ENCODE measurements at regions of chr5 and their contacts with region 1.

Region 1: DNA sequence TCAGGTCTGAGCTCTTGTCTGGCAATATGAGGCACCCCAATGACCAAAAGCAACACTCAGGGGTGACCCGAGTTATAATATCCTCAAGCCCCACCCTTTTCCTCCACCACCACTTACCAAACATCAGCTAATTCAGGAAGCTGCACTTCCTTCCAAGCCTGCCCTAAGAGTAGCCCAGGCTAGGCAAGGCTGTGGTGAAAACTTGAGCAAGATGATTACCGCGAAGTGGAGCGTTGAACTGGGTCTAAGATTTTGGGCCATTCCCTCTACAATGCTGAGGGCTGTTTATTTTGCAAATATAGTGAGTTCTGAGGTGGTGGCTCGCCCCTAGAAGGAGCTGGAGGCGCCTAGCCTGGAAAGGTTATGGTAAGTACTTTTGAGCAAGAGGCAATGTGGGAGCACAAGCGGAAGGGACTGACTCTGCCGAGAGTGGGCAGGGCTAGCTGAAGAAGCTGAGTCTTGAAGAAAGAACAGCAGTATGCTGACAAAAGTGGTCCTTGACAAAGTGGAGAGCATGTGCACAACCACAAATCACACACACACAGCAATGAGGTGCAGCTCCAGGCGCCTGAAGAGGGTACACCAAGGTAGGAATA is at the start of gene HK3:
- DNase-seq: peak; percentile 77 to 83 (median 82)
- H3K4me3 ChIP-seq: peak within 1 kb of the TSS; percentile 63 to 82 (median 70)
- H3K4me3 Mint-ChIP-seq: peak within 1 kb of the TSS; percentile 88 to 92
- H3K27ac ChIP-seq: peak within 1 kb of the TSS; percentile 84 to 88
- H3K27ac Mint-ChIP-seq: peak within 1 kb of the TSS; percentile 89 to 98 (median 97)
- H3K4me1 ChIP-seq: peaks cover 95 to 97% of the 10 kb centered on the region in 2 donors
- H3K4me1 Mint-ChIP-seq: peaks cover 97% of the 10 kb centered on the region
- H3K27me3 ChIP-seq: no peaks in the 10 kb centered on the region
- H3K27me3 Mint-ChIP-seq: peaks cover 0 to 2% (median 0%) of the 10 kb centered on the region in 3 donors
- CTCF ChIP-seq: no peak
- polyA plus RNA-seq, gene HK3: 174 to 988 (median 204) TPM

Region 2: DNA sequence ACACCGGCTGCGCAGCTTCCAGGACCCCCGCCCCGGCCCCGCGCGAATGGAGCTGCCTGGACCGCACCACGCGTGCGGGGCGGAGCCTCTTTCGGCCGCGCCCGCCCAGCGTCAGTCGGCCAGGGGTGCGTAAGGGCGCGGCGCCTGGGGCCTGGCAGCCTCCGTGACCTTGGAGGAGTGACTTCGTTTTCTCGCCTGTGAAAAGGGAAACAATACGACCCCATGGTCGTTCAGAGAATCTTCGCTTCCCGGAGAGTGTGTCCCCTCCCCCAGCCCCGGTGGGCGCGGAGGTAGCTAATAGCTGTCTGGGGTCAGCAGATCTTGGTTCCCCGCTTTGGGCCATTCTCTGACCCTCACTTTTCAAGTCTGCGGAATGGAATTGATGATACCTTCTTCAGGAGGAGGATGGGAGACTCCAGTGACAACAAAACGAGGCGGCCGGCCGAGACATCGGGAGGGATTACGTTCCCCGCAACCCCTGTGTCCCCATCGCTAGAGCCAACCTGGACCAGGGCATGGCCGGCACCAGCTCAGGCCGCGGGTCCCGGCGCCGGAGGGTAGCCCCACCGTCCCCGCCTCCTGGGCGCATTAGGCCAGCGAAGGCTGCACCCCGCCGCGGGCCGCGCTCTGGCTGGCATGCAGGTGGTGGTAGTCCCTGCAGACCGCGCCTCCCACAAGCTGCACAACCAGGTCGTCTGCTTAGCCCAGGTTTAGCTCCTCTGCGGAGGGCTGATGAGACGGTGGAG is 355.8 kb before region 1 on chr5:
- intact Hi-C with region 1: loop called in 1 of 2 experiments (anchors 10 kb)
- DNase-seq: peak; percentile 54 to 64 (median 56)
- H3K4me3 ChIP-seq: peak overlapping the region; percentile 44 to 78 (median 55)
- H3K4me3 Mint-ChIP-seq: peak overlapping the region; percentile 89 to 91
- H3K27ac ChIP-seq: peak overlapping the region; percentile 74 to 85
- H3K27ac Mint-ChIP-seq: peak overlapping the region; percentile 95 to 99 (median 97)
- H3K4me1 ChIP-seq: peaks cover 61 to 79% of the 10 kb centered on the region in 2 donors
- H3K4me1 Mint-ChIP-seq: peaks cover 68% of the 10 kb centered on the region
- H3K27me3 ChIP-seq: no peaks in the 10 kb centered on the region
- H3K27me3 Mint-ChIP-seq: peaks cover 0 to 1% (median 0%) of the 10 kb centered on the region in 3 donors
- CTCF ChIP-seq: no peak

Region 3: DNA sequence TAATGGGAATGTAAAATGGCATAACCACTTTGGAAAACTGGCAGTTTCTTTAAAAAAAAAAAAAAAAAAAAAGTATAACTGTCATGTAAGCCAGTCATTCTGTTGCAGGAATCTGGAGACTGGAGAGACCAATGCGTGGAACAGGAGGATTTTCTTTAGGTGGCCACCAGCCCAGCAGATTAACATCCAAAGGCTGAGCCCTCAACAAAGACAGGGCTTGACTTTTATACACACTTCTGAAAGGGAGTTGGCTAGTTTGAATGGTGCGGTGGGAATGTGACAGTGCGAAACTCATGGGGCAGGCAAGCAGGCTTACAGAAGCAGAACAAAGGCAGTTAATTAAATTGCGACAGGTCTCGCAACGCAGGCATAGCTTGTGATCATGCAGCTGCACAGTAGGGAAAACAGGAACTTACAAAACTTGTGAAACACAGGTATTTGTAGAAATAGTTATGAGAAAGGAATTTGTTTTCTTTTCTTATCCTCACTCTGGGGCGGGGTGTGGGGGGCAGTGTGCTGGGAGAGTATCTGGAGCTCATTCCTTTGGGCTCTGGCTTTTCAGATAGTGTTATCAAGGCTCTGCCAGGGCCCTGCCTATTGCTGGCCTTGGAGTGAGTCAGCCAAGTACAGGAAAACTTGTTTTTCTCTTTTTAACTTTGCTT is 95.2 kb after region 1 on chr5:
- intact Hi-C with region 1: loop called in 1 of 2 experiments (anchors 5 kb)
- DNase-seq: peak; percentile 97 to 98 (median 98)
- H3K4me3 ChIP-seq: peak overlapping the region in 1 of 3 experiments; percentile 50
- H3K4me3 Mint-ChIP-seq: peak overlapping the region; percentile 59 to 72
- H3K27ac ChIP-seq: peak overlapping the region; percentile 99 to 100
- H3K27ac Mint-ChIP-seq: peak overlapping the region; percentile 93 to 100 (median 99)
- H3K4me1 ChIP-seq: peaks cover 68 to 75% of the 10 kb centered on the region in 2 donors
- H3K4me1 Mint-ChIP-seq: peaks cover 61% of the 10 kb centered on the region
- H3K27me3 ChIP-seq: no peaks in the 10 kb centered on the region
- H3K27me3 Mint-ChIP-seq: peaks cover 0 to 3% (median 0%) of the 10 kb centered on the region in 3 donors
- CTCF ChIP-seq: no peak

Region 4: GRCh38 chr5:177006265-177006972 is 107.0 kb after region 1 on chr5 and contains the start of gene UIMC1:
- intact Hi-C with region 1: loop called in 1 of 2 experiments (anchors 10 kb)
- DNase-seq: peak; percentile 83 to 90 (median 90)
- H3K4me3 ChIP-seq: peak within 1 kb of the TSS; percentile 78 to 90 (median 90)
- H3K4me3 Mint-ChIP-seq: peak within 1 kb of the TSS; percentile 91 to 95
- H3K27ac ChIP-seq: peak within 1 kb of the TSS; percentile 93 to 96
- H3K27ac Mint-ChIP-seq: peak within 1 kb of the TSS; percentile 97 to 99 (median 99)
- H3K4me1 ChIP-seq: peaks cover 23 to 30% of the 10 kb centered on the region in 2 donors
- H3K4me1 Mint-ChIP-seq: peaks cover 20% of the 10 kb centered on the region
- H3K27me3 ChIP-seq: no peaks in the 10 kb centered on the region
- H3K27me3 Mint-ChIP-seq: peaks cover 0 to 4% (median 3%) of the 10 kb centered on the region in 3 donors
- CTCF ChIP-seq: no peak
- polyA plus RNA-seq, gene UIMC1: 14.8 to 35.6 (median 19.1) TPM